Activated naive CD4-positive, alpha-beta T cell treated with anti-CD3 and anti-CD28 coated beads for 36 hours (primary cell): ENCODE measurements at regions of chr2 and their contacts with region 1.

Region 1: DNA sequence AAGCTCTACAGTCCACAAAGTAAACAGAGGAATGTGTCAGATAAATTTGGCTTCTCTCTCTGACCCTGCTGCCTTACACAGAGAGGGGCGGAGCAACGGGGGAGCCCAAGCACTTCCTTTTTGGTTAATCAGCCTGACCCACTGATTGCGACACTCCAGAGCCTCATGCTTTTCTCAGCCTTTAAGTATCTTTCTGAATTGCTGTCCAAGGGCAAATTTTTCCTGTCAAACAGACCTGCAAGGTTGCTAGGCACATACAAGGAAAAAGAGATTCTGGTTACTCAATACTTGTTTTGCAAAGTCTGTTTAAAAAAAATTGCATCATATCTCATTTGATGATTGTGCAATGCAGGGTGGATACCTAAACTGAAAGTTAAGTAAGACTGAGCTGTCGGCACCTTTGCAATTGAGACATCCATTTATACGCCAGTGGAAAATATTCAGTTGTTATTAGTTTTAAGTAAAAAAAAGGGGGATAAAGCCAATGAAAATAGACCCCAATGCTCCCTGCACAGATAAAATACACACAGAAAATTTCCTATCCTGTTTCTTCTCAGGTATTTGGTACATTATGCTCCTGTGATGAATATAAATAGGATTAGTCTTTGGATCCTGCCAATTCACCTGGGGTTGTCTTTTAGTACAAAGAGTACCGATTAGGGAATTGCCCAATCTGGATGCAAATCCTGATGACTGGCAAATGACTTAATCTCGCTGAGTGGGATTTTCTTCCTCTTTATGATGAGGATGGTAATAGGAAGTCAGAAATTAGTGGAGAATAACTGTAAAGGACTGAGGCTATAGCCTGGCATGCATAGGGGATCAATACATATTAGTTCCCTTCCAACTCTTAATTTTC is 260.2 kb upstream of the TRIB2 start:
- DNase-seq: peak; percentile 79
- H3K4me3 Mint-ChIP-seq: peak overlapping the region; percentile 63
- H3K27ac Mint-ChIP-seq: peak overlapping the region; percentile 86
- H3K4me1 Mint-ChIP-seq: peaks cover 36% of the 10 kb centered on the region
- H3K27me3 Mint-ChIP-seq: no peaks in the 10 kb centered on the region

Region 2: GRCh38 chr2:12151716-12152115 is 304.8 kb before region 1 on chr2:
- CTCF ChIA-PET with region 1: no interaction called
- intact Hi-C with region 1: no loop called
- DNase-seq: no peak
- H3K4me3 Mint-ChIP-seq: no peak overlapping the region
- H3K27ac Mint-ChIP-seq: no peak overlapping the region
- H3K4me1 Mint-ChIP-seq: no peaks in the 10 kb centered on the region
- H3K27me3 Mint-ChIP-seq: no peaks in the 10 kb centered on the region

Region 3: GRCh38 chr2:12416600-12416999 is 39.9 kb before region 1 on chr2:
- CTCF ChIA-PET with region 1: interaction called, 3 read pairs
- intact Hi-C with region 1: loop called (anchors 2 kb)
- DNase-seq: peak; percentile 72
- H3K4me3 Mint-ChIP-seq: no peak overlapping the region
- H3K27ac Mint-ChIP-seq: no peak overlapping the region
- H3K4me1 Mint-ChIP-seq: peaks cover 34% of the 10 kb centered on the region
- H3K27me3 Mint-ChIP-seq: no peaks in the 10 kb centered on the region

Region 4: GRCh38 chr2:12442476-12442847 is 14.1 kb before region 1 on chr2:
- CTCF ChIA-PET with region 1: no interaction called
- intact Hi-C with region 1: loop called (anchors 1 kb)
- DNase-seq: no peak
- H3K4me3 Mint-ChIP-seq: no peak overlapping the region
- H3K27ac Mint-ChIP-seq: no peak overlapping the region
- H3K4me1 Mint-ChIP-seq: peaks cover 16% of the 10 kb centered on the region
- H3K27me3 Mint-ChIP-seq: no peaks in the 10 kb centered on the region

Region 5: DNA sequence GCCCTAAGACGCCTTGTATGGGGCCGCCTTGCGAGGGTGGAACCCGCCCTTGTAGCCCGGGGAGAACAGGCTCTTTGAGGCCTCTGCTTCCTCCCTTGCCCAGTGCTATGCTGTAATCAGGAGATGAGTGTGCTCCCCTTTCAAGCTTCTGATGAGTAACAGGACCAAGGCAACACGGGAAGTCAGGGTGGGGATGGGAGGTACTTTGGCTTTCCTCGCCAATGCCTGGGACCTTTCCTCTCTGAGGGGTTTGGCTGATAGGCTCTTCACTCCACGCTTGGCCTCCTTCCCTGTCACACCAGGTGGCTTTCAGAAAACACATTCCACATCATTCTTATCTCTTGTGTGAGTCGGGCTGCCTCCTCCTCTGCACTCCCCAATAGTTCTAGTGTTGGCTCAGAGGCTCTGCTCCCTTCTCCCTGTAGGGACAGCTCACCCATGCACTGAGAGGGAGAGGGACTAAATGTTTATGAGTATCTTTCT is 36.5 kb after region 1 on chr2:
- CTCF ChIA-PET with region 1: no interaction called
- intact Hi-C with region 1: loop called (anchors 2 kb)
- DNase-seq: peak; percentile 81
- H3K4me3 Mint-ChIP-seq: peak overlapping the region; percentile 34
- H3K27ac Mint-ChIP-seq: peak overlapping the region; percentile 85
- H3K4me1 Mint-ChIP-seq: peaks cover 61% of the 10 kb centered on the region
- H3K27me3 Mint-ChIP-seq: no peaks in the 10 kb centered on the region

Region 6: GRCh38 chr2:12501469-12502158 is 45.1 kb after region 1 on chr2:
- CTCF ChIA-PET with region 1: no interaction called
- intact Hi-C with region 1: loop called (anchors 1 kb)
- DNase-seq: peak; percentile 88
- H3K4me3 Mint-ChIP-seq: no peak overlapping the region
- H3K27ac Mint-ChIP-seq: peak overlapping the region; percentile 47
- H3K4me1 Mint-ChIP-seq: peaks cover 91% of the 10 kb centered on the region
- H3K27me3 Mint-ChIP-seq: no peaks in the 10 kb centered on the region